T-cell (primary cell): ENCODE measurements at regions of chr17 and their contacts with region 1.

Region 1: GRCh38 chr17:64615028-64615677 is 47.0 kb downstream of the SMURF2 start:
- DNase-seq: no peak
- ATAC-seq: no peak
- H3K4me3 ChIP-seq: no peak overlapping the region
- H3K4me3 Mint-ChIP-seq: no peak overlapping the region
- H3K27ac ChIP-seq: no peak overlapping the region
- H3K27ac Mint-ChIP-seq: no peak overlapping the region
- H3K4me1 ChIP-seq: peaks cover under 1 to 7% of the 10 kb centered on the region in 2 experiments
- H3K4me1 Mint-ChIP-seq: peaks cover 34 to 47% (median 44%) of the 10 kb centered on the region in 3 donors
- H3K27me3 ChIP-seq: no peaks in the 10 kb centered on the region
- H3K27me3 Mint-ChIP-seq: no peaks in the 10 kb centered on the region

Region 2: GRCh38 chr17:66290101-66290722 is 1675.1 kb after region 1 on chr17:
- CTCF ChIA-PET with region 1: no interaction called
- POLR2A ChIA-PET with region 1: interaction called in 1 of 2 experiments, 14 read pairs
- DNase-seq: peak in 1 of 35 experiments; percentile 27
- ATAC-seq: peak in 1 of 4 experiments; percentile 31
- H3K4me3 ChIP-seq: no peak overlapping the region
- H3K4me3 Mint-ChIP-seq: no peak overlapping the region
- H3K27ac ChIP-seq: no peak overlapping the region
- H3K27ac Mint-ChIP-seq: no peak overlapping the region
- H3K4me1 ChIP-seq: peaks cover 17 to 25% of the 10 kb centered on the region in 2 experiments
- H3K4me1 Mint-ChIP-seq: peaks cover 34 to 43% (median 38%) of the 10 kb centered on the region in 3 donors
- H3K27me3 ChIP-seq: no peaks in the 10 kb centered on the region
- H3K27me3 Mint-ChIP-seq: no peaks in the 10 kb centered on the region